Activated T-helper 1 cell treated with anti-CD3 and anti-CD28 coated beads, Interleukin-12 subunit alpha, Interleukin-12 subunit beta, Interleukin-2, Interleukin-4 antibody, amounts not matched to agents 30 ng/mL and 10 ng/mL and 1 ng/mL, durations not matched to agents 14 hours and 24 hours and 36 hours (primary cell): ENCODE measurements at regions of chr14 and their contacts with region 1.

Region 1: GRCh38 chr14:69611201-69612011 is at the start of gene SUSD6:
- DNase-seq: peak; percentile 84
- H3K4me3 Mint-ChIP-seq: peak within 1 kb of the TSS; percentile 98
- H3K27ac Mint-ChIP-seq: peak within 1 kb of the TSS; percentile 93
- H3K4me1 Mint-ChIP-seq: peaks cover 61% of the 10 kb centered on the region
- H3K27me3 Mint-ChIP-seq: no peaks in the 10 kb centered on the region
- total RNA-seq, gene SUSD6: 91.3 and 94.3 TPM in 2 replicates

Region 2: GRCh38 chr14:69625299-69626131 is 14.1 kb after region 1 on chr14:
- intact Hi-C with region 1: loop called (anchors 1 kb)
- DNase-seq: peak; percentile 75
- H3K4me3 Mint-ChIP-seq: peak overlapping the region; percentile 76
- H3K27ac Mint-ChIP-seq: peak overlapping the region; percentile 92
- H3K4me1 Mint-ChIP-seq: peaks cover 94% of the 10 kb centered on the region
- H3K27me3 Mint-ChIP-seq: no peaks in the 10 kb centered on the region

Region 3: DNA sequence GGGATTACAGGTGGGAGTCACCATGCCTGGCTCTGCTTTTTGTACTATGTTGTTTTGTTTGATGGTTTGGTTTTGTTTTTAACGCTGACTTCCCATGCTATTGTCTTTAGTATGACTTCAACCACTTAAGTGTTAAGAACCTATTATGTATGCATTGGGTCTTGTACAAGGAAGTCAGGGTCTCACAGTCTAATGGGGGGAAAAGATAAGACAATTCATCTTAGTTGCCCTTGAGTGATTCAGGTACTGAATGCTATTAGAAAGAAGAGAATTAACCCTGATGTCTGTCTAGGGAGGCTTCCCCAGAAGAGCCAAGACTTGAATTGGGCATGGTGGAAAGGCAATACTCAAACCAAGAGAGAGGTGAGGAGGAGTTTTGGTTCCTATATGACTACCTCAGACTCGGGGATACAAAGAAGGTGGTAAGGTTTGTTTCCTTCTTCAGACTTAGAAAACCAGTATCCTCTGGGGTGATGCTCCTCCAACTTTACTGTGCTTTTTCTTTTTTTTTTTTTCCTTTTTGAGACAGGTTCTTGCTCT is 64.5 kb after region 1 on chr14:
- intact Hi-C with region 1: loop called (anchors 1 kb)
- DNase-seq: peak; percentile 54
- H3K4me3 Mint-ChIP-seq: peak overlapping the region; percentile 68
- H3K27ac Mint-ChIP-seq: peak overlapping the region; percentile 98
- H3K4me1 Mint-ChIP-seq: peaks cover 78% of the 10 kb centered on the region
- H3K27me3 Mint-ChIP-seq: no peaks in the 10 kb centered on the region

Region 4: DNA sequence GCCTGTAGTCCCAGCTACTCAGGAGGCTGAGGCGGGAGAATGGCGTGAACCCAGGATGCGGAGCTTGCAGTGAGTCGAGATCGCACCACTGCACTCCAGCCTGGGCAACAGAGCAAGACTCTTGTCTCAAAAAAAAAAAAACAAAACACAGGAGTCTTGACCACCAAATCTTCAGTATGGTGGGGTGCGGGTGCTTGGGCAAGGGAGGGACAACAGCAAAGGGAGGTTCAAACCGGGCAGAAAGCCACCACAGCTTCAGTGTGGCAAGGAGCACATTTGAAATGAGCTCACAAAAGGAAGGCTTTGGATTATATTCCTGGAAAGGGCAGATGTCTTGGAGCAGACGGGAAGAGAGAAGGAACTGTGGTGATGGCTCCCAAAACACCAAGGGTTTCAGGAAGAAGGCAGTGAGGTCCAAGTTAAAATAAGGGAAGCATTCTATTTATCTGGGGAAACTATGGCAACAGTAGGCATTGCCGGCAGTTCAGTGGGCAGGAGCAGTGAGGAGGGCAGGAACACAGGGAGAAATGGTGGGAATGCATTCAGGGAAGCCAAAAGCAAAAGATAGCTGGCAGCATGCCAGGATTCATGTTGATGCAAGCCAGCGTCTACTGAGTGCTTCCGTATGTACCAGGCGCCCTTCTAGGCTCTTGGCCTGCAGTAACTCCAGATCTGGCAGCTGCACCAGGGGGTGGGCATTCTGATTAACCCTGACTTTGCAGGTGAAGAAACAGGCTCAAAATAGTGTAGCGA is 104.5 kb after region 1 on chr14:
- intact Hi-C with region 1: loop called (anchors 2 kb)
- DNase-seq: no peak
- H3K4me3 Mint-ChIP-seq: peak overlapping the region; percentile 46
- H3K27ac Mint-ChIP-seq: peak overlapping the region; percentile 92
- H3K4me1 Mint-ChIP-seq: peaks cover 94% of the 10 kb centered on the region
- H3K27me3 Mint-ChIP-seq: no peaks in the 10 kb centered on the region